ENCODE measurements at regions of chr3 and their contacts with region 1.

Region 1: DNA sequence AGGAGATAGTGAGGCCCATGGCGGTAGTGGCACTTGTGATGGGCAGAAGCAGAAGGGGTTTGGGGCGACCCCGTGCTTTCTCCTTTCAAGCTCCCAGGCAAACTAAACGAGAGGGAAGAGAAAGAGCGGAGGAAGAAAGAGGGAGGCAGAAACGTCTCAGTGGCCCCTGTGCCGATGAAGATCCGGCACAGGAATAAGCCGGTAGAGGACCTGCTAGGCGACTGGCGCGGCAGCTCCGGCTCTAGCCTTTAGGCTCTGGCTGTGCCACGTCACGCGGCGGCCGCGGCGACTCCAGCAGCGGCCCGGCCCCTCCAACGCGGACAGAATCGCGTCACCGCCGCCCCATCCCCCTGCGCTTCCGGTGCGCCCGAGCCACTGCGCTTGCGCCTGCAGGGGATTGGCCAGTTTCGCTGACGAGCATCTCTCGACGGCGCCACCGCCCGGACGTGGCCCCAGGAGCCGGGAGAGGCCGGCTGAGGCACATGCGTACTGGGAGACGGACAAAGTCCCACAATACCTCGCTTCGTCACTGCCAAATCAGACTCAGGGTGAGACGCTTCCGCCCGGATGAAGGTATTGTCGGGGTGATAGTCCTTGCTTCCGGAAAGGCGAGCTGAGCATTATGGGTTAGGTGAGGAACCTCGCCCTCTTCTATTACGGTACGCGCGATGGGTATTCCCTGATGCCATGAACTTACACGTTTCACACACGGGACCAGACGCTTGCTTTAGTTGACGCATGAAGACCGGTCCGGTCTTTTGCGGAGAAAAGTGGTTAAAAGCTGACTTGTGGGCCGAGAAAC is at the start of gene ARF4:
- DNase-seq: peak; percentile 100
- ATAC-seq: peak; percentile 89
- H3K4me3 Mint-ChIP-seq: peak within 1 kb of the TSS; percentile 95
- H3K27ac Mint-ChIP-seq: peak within 1 kb of the TSS; percentile 100
- H3K4me1 Mint-ChIP-seq: peaks cover 53% of the 10 kb centered on the region
- H3K27me3 Mint-ChIP-seq: no peaks in the 10 kb centered on the region
- CTCF ChIP-seq: no peak
- total RNA-seq, gene ARF4: 43.0 and 45.1 TPM in 2 replicates

Region 2: DNA sequence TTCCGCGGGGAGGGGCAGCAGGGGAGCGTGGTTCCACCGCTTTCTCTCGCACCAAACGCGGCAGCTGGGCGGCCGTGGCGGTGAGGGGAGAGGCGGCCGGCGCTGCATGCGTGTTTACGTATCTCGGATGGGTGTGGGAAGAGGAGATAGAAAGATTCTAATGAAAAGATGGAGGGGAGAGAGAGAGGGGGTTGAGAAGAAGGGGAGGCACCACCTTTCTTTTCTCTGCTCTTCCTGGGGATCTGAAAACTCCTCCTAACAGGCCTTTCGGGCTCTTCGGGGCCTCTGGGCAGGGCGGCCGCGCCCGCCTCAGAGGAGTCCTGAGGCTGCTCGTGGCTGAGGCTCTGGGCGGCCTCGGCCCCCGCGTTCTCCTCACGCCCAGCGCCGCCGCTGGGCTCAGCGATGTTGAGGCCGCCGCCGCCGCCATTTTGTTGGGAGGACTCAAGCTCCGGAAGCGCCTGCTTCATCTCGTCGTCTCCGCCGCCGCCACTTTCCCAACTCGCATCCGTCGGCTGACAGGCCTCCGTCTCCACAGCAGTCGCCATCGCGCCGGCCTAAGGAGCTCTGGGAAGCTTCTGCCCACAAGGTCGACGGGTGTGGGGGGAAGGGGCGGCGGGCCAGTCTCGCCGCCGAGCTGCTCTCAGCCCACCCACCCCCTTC is 914.7 kb before region 1 on chr3:
- CTCF ChIA-PET with region 1: no interaction called
- POLR2A ChIA-PET with region 1: interaction called, 4 read pairs
- intact Hi-C with region 1: loop called (anchors 1 kb)
- DNase-seq: peak; percentile 76
- ATAC-seq: peak; percentile 73
- H3K4me3 Mint-ChIP-seq: peak overlapping the region; percentile 97
- H3K27ac Mint-ChIP-seq: peak overlapping the region; percentile 97
- H3K4me1 Mint-ChIP-seq: peaks cover 49% of the 10 kb centered on the region
- H3K27me3 Mint-ChIP-seq: no peaks in the 10 kb centered on the region
- CTCF ChIP-seq: no peak

Region 3: DNA sequence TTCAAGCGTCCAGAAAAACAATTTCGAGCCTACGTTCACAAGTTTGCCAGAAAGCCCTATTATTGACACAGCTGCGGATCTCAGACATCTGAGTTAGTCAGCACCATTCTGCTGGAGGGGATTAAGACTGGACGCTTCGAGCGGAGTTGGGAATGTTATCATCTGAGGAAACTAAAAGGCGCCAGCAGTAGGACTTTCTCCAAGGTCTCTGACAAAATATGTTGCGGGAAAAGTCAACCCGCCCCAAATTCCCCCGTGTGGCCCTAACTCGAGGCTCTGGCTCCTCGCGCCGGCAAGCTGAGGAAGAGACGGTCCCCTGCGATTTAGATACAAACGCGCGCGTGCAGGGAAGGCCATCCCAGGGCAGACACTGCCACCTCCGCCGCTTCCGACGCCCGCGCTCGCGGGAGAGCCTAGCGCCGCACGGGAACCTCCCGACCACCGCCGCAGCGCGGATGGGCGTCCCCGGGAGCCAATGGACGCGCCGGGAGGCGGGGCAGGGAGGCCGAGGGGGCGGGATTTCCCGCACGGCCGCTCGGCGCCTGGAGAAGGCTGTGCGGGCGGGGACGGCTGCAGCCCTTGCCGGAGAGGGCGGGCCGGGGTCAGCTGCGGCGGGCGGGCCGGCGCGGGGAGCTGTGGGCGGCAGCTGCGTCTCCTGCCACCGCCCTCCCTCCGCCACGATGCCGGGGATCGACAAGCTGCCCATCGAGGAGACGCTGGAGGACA is 370.0 kb before region 1 on chr3 and contains the start of gene APPL1:
- CTCF ChIA-PET with region 1: no interaction called
- POLR2A ChIA-PET with region 1: interaction called, 5 read pairs
- intact Hi-C with region 1: loop called (anchors 1 kb)
- DNase-seq: peak; percentile 95
- ATAC-seq: peak; percentile 97
- H3K4me3 Mint-ChIP-seq: peak within 1 kb of the TSS; percentile 94
- H3K27ac Mint-ChIP-seq: peak within 1 kb of the TSS; percentile 87
- H3K4me1 Mint-ChIP-seq: peaks cover 45% of the 10 kb centered on the region
- H3K27me3 Mint-ChIP-seq: no peaks in the 10 kb centered on the region
- CTCF ChIP-seq: no peak
- total RNA-seq, gene APPL1: 58.3 and 62.0 TPM in 2 replicates

Region 4: DNA sequence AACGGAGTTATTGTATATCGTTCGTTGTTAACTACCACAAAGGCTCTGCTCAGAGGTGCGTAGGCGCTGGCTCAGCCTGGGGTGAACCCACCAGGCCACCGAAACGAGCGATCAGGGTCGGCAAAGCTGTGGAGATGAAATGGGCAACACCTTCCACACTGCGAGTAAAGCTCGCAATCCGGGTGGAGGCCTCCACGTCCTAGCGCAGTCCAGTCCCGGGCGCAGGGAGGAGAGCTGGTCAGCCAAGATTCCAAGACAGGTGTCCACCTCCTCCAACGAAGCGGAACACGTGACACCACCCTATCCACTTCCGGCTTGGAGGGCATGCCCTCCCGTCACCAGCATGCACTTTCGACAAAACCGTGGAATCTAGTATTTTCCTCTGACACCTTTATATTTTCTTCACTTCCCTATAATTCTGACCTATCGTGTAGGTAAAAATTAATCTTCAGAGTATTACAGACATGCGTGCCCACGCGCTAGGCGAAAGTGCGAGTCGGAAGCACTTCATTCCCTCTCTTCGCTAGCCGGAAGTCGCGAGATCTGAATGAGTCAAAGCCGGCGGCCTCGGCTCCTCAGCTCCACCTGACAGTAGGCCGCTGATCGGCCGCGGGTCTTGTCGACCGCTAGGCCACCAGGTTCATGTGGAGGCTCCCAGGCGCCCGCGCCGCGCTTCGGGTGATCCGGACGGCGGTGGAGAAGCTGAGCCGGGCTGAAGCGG is 41.4 kb before region 1 on chr3 and contains the start of gene PDE12:
- CTCF ChIA-PET with region 1: interaction called, 3 read pairs
- POLR2A ChIA-PET with region 1: interaction called, 99 read pairs
- intact Hi-C with region 1: loop called (anchors 1 kb)
- DNase-seq: peak; percentile 77
- ATAC-seq: peak; percentile 79
- H3K4me3 Mint-ChIP-seq: peak within 1 kb of the TSS; percentile 87
- H3K27ac Mint-ChIP-seq: peak within 1 kb of the TSS; percentile 99
- H3K4me1 Mint-ChIP-seq: peaks cover 41% of the 10 kb centered on the region
- H3K27me3 Mint-ChIP-seq: no peaks in the 10 kb centered on the region
- CTCF ChIP-seq: no peak
- total RNA-seq, gene PDE12: 23.7 and 24.8 TPM in 2 replicates

Region 5: GRCh38 chr3:57586778-57587177 is 10.5 kb before region 1 on chr3:
- CTCF ChIA-PET with region 1: no interaction called
- POLR2A ChIA-PET with region 1: no interaction called
- intact Hi-C with region 1: no loop called
- DNase-seq: no peak
- ATAC-seq: no peak
- H3K4me3 Mint-ChIP-seq: no peak overlapping the region
- H3K27ac Mint-ChIP-seq: no peak overlapping the region
- H3K4me1 Mint-ChIP-seq: peaks cover 30% of the 10 kb centered on the region
- H3K27me3 Mint-ChIP-seq: no peaks in the 10 kb centered on the region
- CTCF ChIP-seq: no peak

Region 6: DNA sequence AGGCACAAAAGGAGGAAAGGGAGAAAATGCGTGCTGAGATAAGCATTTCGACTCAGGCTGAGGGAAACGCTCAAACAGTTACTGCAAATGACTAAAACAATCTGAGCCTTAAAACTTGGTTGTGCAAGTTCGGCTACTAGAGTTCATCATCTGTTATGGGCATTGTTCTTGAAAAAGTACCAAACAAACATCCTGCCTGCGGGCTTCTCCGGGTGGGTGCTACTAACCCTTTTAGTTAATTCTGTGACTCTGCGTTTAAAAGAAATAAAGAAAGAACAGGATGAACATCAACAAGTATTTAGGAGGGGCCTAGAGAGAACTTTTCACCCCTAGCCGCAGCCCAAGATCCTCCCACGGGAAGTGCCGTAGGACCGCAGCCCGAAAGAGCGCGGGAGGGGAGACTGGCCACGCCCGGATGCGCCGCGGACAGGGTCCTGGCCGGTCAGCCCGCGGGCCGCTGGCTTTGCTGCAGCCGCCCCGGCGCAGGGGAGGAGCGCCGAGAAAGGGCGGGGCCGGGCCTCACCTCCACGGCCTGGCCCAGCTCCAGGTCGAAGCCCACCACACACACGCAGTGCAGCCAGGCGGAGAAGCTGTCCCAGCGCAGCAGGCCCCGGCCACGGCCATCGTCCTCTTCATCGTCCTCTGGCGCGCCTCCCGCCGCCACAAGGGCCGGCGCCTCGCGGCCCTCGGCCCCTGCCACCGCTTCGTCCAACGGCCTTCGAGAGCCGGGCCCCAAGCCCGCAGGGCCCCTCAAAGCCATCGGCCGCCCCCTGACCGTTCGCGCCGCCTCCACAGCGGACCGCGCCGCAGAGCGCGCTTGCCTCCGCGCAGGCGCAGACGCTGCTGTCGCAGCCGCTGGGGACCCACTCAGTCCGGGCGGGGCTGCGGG is 95.2 kb after region 1 on chr3 and contains the start of gene DENND6A:
- CTCF ChIA-PET with region 1: no interaction called
- POLR2A ChIA-PET with region 1: interaction called, 15 read pairs
- intact Hi-C with region 1: loop called (anchors 1 kb)
- DNase-seq: peak; percentile 95
- ATAC-seq: peak; percentile 86
- H3K4me3 Mint-ChIP-seq: peak within 1 kb of the TSS; percentile 89
- H3K27ac Mint-ChIP-seq: peak within 1 kb of the TSS; percentile 85
- H3K4me1 Mint-ChIP-seq: peaks cover 35% of the 10 kb centered on the region
- H3K27me3 Mint-ChIP-seq: no peaks in the 10 kb centered on the region
- CTCF ChIP-seq: no peak
- total RNA-seq, gene DENND6A: 21.5 and 25.7 TPM in 2 replicates

Region 7: DNA sequence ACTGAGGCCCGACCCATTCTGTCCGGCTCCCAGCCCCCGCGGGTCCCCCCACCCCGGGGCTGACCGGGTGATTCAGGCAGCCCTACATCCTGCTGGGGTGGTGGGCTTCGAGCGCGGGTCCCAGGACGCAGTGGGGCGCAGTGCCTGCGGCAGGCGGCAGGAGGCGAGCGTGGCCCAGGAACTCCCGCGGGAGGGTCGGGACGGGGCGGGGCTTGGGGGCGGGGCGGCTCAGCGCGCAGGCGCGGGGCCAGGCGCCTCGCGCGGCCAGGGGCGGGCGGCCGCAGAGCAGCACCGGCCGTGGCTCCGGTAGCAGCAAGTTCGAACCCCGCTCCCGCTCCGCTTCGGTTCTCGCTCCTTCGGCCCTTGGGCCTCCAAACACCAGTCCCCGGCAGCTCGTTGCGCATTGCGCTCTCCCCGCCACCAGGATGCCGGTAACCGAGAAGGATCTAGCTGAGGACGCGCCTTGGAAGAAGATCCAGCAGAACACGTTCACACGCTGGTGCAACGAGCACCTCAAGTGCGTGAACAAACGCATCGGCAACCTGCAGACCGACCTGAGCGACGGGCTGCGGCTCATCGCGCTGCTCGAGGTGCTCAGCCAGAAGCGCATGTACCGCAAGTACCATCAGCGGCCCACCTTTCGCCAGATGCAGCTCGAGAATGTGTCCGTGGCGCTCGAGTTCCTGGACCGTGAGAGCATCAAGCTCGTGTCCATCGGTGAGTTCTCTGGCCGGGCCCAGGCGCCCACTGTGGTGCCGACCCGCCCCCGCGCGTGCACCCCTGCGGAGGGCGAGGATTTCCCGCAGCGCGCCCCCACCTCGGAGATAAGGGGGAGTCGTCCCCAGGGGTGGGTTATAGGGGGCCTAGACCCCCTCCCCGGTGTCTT is 411.1 kb after region 1 on chr3 and contains the start of gene FLNB:
- CTCF ChIA-PET with region 1: no interaction called
- POLR2A ChIA-PET with region 1: no interaction called
- intact Hi-C with region 1: loop called (anchors 1 kb)
- DNase-seq: peak; percentile 72
- ATAC-seq: peak; percentile 93
- H3K4me3 Mint-ChIP-seq: peak within 1 kb of the TSS; percentile 95
- H3K27ac Mint-ChIP-seq: peak within 1 kb of the TSS; percentile 73
- H3K4me1 Mint-ChIP-seq: peaks cover 16% of the 10 kb centered on the region
- H3K27me3 Mint-ChIP-seq: no peaks in the 10 kb centered on the region
- CTCF ChIP-seq: no peak
- total RNA-seq, gene FLNB: 13.4 and 16.7 TPM in 2 replicates